ENCODE measurements at regions of chr1 and their contacts with region 1.

Region 1: GRCh38 chr1:151739590-151740375 is 18.5 kb downstream of the RIIAD1 start:
- DNase-seq: no peak
- H3K4me3 ChIP-seq: no peak overlapping the region
- H3K27ac ChIP-seq: no peak overlapping the region
- H3K4me1 ChIP-seq: no peaks in the 10 kb centered on the region
- CTCF ChIP-seq: no peak

Region 2: GRCh38 chr1:151309811-151310323 is 429.9 kb before region 1 on chr1:
- CTCF ChIA-PET with region 1: no interaction called
- POLR2A ChIA-PET with region 1: no interaction called
- intact Hi-C with region 1: loop called (anchors 10 kb)
- DNase-seq: no peak
- H3K4me3 ChIP-seq: no peak overlapping the region
- H3K27ac ChIP-seq: no peak overlapping the region
- H3K4me1 ChIP-seq: no peaks in the 10 kb centered on the region
- CTCF ChIP-seq: no peak

Region 3: GRCh38 chr1:151443846-151444782 is 295.7 kb before region 1 on chr1:
- CTCF ChIA-PET with region 1: no interaction called
- POLR2A ChIA-PET with region 1: no interaction called
- intact Hi-C with region 1: loop called (anchors 10 kb)
- DNase-seq: peak; percentile 80
- H3K4me3 ChIP-seq: peak overlapping the region; percentile 58
- H3K27ac ChIP-seq: peak overlapping the region; percentile 74
- H3K4me1 ChIP-seq: peaks cover 55% of the 10 kb centered on the region
- CTCF ChIP-seq: peak; percentile 96

Region 4: GRCh38 chr1:151534665-151535278 is 205.0 kb before region 1 on chr1:
- CTCF ChIA-PET with region 1: no interaction called
- POLR2A ChIA-PET with region 1: no interaction called
- intact Hi-C with region 1: loop called (anchors 1 kb)
- DNase-seq: peak; percentile 70
- H3K4me3 ChIP-seq: no peak overlapping the region
- H3K27ac ChIP-seq: no peak overlapping the region
- H3K4me1 ChIP-seq: no peaks in the 10 kb centered on the region
- CTCF ChIP-seq: peak; percentile 97

Region 5: DNA sequence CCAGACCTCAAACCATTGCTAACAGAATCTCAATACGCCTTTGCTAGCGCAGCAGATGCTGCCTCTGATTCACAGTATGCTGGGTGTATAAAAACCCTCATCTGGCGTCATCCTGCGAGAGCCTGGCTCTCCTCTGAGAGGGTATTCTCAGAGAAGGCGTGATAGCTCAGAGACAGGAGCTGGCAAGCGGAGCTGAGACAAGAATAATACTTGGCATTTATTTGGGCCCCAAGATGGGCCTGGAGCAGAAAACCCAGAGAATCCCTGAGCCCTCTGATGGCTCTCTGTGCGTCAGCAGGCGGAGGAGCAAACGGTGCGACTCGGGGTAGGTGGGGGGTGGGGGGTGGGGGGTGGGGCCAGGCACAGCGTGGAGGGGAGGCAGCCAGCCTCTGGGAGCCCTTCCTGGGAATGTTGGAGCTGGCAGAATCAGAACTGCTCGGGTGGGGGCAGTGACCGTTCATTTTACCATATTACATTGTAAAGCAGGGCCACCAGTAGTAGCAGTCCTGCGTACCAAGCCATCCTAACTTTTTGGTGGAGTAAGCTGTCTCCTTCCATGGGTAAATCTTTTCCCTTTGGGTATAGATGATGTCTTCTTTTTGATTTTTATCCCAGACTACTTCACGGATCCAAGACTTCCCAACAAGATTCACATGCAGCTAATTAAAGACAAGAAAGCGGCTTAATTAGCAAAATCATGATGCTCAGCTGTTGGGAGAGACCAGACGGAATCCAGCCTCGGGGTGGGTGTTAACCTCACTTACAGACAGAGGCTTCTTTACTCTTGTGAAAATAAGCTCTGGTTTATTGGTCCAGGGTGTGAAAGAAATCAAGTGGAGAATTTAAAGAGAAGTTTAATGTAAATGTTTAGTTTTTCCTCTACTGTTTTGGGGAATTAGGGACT is 11.4 kb before region 1 on chr1:
- CTCF ChIA-PET with region 1: no interaction called
- POLR2A ChIA-PET with region 1: no interaction called
- intact Hi-C with region 1: no loop called
- DNase-seq: no peak
- H3K4me3 ChIP-seq: no peak overlapping the region
- H3K27ac ChIP-seq: no peak overlapping the region
- H3K4me1 ChIP-seq: no peaks in the 10 kb centered on the region
- CTCF ChIP-seq: no peak

Region 6: DNA sequence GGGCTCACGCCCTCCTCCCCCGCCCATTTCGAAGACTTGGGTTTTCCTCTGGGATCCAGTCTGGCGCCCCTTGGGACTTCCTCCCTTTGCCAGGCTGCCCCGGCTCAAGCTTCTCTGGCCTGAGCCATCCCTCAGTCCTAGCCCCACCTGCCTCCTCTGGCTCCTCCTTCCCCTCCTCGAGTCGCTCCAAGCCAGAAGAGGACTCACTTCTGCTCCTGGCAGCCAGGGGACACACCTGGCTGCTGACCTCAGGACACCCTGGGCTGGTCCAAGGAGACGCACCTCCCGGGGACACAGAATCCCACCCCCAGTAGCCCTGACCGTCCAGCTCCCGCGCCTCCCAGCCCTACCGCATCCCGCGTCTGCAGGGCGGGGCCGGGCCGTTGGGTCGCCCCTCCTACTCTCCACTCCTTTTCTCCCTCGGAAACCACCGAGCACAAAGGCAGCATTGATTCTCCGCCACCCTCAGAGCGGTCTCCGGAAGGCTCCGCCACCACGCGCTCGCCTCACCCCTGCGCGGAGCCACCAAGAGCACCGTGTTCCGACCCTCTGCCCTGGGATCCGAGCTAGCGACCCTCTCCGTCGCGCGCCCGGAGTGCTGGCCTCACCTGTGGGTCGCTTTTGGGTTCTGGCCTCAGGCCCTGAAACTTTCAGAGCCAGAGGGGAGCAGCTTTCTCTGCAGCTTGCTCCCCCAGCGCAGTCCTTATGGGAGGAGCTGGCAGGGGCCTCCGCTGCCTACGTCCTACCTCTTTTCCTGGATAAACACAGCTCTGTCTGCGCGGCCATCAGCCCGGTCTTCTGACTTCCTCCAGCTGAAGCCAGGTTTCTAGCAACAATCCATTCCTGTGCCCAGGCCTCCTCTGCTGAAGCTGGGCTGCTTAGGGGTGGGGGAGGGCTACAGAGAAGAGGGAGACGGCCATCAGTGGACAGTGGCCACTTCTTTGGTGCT is 99.9 kb after region 1 on chr1 and contains the start of gene C2CD4D:
- CTCF ChIA-PET with region 1: no interaction called
- POLR2A ChIA-PET with region 1: interaction called, 3 read pairs
- intact Hi-C with region 1: loop called (anchors 2 kb)
- DNase-seq: no peak
- H3K4me3 ChIP-seq: no peak within 1 kb of the TSS
- H3K27ac ChIP-seq: no peak within 1 kb of the TSS
- H3K4me1 ChIP-seq: peaks cover 16% of the 10 kb centered on the region
- CTCF ChIP-seq: no peak
- total RNA-seq, gene C2CD4D: not detected in 2 replicates

Measured in OCI-LY7 (cell line).